ENCODE measurements at regions of chr7 and their contacts with region 1.

Region 1: DNA sequence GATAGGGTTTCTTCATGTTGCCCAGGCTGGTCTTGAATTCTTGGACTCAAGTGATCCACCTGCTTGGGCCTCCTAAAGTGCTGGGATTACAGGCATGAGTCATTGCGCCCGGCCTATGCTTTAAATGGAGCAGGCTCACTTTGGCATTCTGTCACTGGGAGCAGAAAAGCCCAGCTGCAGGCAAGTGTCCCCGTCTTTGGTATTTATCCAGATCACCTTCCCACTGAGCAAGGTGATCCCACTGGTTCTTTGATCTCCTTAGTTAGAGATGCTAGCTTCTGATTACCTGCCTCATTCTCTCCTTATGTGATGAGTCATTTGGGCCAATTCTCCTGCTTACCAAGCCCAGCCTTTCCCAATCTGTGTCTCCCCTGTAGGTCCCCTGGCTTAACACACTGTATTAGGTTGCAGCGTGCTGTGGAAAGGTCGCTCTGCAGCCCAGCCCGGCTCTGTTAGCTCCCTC is 39.3 kb downstream of the SPDYE5 start:
- DNase-seq: no peak
- ATAC-seq: no peak
- H3K4me3 Mint-ChIP-seq: no peak overlapping the region
- H3K27ac Mint-ChIP-seq: no peak overlapping the region
- H3K4me1 Mint-ChIP-seq: peaks cover 24% of the 10 kb centered on the region
- H3K27me3 Mint-ChIP-seq: no peaks in the 10 kb centered on the region
- CTCF ChIP-seq: no peak

Region 2: DNA sequence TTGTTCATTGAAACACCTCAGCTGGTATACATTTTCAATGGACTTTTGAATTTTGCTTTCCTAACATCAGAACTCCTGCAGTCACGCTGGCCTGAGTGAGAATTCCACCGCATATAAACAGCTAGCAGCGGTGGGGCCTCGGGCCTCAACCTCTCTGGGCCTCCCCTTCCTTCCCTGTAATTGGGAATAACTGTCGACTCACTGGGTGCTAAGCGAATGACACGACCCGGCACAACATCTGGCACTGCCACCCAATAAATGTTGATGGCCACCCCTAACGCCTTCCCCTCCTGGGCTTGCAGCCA is 458.5 kb before region 1 on chr7:
- CTCF ChIA-PET with region 1: no interaction called
- POLR2A ChIA-PET with region 1: no interaction called
- intact Hi-C with region 1: loop called (anchors 5 kb)
- DNase-seq: no peak
- ATAC-seq: no peak
- H3K4me3 Mint-ChIP-seq: peak overlapping the region; percentile 96
- H3K27ac Mint-ChIP-seq: peak overlapping the region; percentile 96
- H3K4me1 Mint-ChIP-seq: peaks cover 13% of the 10 kb centered on the region
- H3K27me3 Mint-ChIP-seq: no peaks in the 10 kb centered on the region
- CTCF ChIP-seq: no peak

Region 3: GRCh38 chr7:75617634-75618234 is 86.3 kb after region 1 on chr7:
- CTCF ChIA-PET with region 1: no interaction called
- POLR2A ChIA-PET with region 1: interaction called, 5 read pairs
- intact Hi-C with region 1: loop called (anchors 5 kb)
- DNase-seq: peak; percentile 50
- ATAC-seq: peak; percentile 83
- H3K4me3 Mint-ChIP-seq: peak overlapping the region; percentile 83
- H3K27ac Mint-ChIP-seq: peak overlapping the region; percentile 92
- H3K4me1 Mint-ChIP-seq: peaks cover 64% of the 10 kb centered on the region
- H3K27me3 Mint-ChIP-seq: no peaks in the 10 kb centered on the region
- CTCF ChIP-seq: no peak

Region 4: DNA sequence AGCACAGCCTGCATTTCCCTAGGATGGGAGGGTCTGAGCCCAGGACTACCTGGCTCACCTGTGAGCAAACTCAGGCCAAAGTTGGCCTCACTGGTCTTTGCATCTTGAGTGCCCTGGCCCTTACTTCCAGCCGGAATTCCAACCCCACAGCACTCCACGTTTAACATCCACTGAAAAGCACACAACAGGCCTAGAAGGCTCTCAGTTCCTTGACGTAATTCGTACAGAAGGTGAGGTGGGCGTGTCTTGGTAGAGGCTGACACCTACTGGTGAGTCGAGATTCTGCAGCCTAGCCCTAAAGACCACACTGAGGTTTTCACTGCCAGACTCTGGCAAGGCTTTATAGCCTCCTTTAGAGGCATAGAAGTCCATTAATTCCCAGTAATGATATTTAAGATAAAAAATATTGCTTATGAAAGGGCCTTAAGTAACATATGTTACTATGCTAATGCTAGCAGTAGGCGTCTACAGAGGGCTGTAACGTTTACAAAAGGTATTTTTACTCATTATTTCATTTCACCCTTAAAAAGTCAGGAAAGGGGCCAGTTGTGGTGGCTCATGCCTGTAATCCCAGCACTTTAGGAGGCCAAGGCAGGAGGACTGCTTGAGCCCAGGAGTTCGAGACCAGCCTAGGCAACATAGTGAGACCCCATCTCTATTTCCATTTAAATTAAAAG is 111.6 kb after region 1 on chr7:
- CTCF ChIA-PET with region 1: no interaction called
- POLR2A ChIA-PET with region 1: no interaction called
- intact Hi-C with region 1: loop called (anchors 1 kb)
- DNase-seq: peak; percentile 39
- ATAC-seq: peak; percentile 90
- H3K4me3 Mint-ChIP-seq: no peak overlapping the region
- H3K27ac Mint-ChIP-seq: no peak overlapping the region
- H3K4me1 Mint-ChIP-seq: peaks cover 17% of the 10 kb centered on the region
- H3K27me3 Mint-ChIP-seq: no peaks in the 10 kb centered on the region
- CTCF ChIP-seq: peak; percentile 41

Region 5: GRCh38 chr7:75662579-75663301 is 131.3 kb after region 1 on chr7:
- CTCF ChIA-PET with region 1: no interaction called
- POLR2A ChIA-PET with region 1: no interaction called
- intact Hi-C with region 1: loop called (anchors 1 kb)
- DNase-seq: peak; percentile 44
- ATAC-seq: peak; percentile 88
- H3K4me3 Mint-ChIP-seq: peak overlapping the region; percentile 55
- H3K27ac Mint-ChIP-seq: peak overlapping the region; percentile 84
- H3K4me1 Mint-ChIP-seq: peaks cover 29% of the 10 kb centered on the region
- H3K27me3 Mint-ChIP-seq: no peaks in the 10 kb centered on the region
- CTCF ChIP-seq: no peak

Region 6: GRCh38 chr7:75738987-75739795 is 207.8 kb after region 1 on chr7:
- CTCF ChIA-PET with region 1: no interaction called
- POLR2A ChIA-PET with region 1: no interaction called
- intact Hi-C with region 1: loop called (anchors 1 kb)
- DNase-seq: peak; percentile 97
- ATAC-seq: peak; percentile 91
- H3K4me3 Mint-ChIP-seq: peak overlapping the region; percentile 96
- H3K27ac Mint-ChIP-seq: peak overlapping the region; percentile 97
- H3K4me1 Mint-ChIP-seq: peaks cover 38% of the 10 kb centered on the region
- H3K27me3 Mint-ChIP-seq: no peaks in the 10 kb centered on the region
- CTCF ChIP-seq: no peak

Region 7: DNA sequence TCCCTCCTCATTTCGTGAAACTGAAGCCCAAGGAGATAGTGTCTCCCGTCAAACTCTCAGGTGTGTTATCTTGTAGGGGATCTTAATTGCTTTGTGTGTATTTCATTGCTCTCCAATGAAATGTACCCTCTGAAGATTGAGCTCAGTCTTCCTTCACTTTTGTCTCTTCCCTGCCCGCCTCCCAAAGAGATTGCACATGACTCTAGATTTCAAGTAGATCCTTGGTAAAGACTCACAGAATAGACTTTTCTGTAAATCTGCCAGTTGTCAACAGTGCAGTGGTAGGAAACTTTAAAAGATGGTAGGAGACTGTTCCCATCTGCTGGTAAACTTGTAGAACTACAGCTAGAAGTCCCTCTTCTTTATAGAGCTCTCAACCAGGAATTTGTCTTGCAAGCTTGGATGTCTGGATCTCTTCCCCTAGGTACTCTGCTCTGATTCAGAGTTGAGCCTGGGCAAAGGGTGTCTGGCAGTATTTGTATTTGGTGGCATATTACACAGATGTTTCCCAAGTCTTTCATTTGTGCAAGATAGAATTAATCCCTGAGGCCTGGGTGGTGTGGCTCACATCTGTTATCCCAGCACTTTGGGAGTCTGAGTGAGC is 231.0 kb after region 1 on chr7:
- CTCF ChIA-PET with region 1: interaction called, 5 read pairs
- POLR2A ChIA-PET with region 1: no interaction called
- intact Hi-C with region 1: loop called (anchors 2 kb)
- DNase-seq: no peak
- ATAC-seq: peak; percentile 90
- H3K4me3 Mint-ChIP-seq: no peak overlapping the region
- H3K27ac Mint-ChIP-seq: no peak overlapping the region
- H3K4me1 Mint-ChIP-seq: peaks cover 5% of the 10 kb centered on the region
- H3K27me3 Mint-ChIP-seq: no peaks in the 10 kb centered on the region
- CTCF ChIP-seq: no peak

Region 8: DNA sequence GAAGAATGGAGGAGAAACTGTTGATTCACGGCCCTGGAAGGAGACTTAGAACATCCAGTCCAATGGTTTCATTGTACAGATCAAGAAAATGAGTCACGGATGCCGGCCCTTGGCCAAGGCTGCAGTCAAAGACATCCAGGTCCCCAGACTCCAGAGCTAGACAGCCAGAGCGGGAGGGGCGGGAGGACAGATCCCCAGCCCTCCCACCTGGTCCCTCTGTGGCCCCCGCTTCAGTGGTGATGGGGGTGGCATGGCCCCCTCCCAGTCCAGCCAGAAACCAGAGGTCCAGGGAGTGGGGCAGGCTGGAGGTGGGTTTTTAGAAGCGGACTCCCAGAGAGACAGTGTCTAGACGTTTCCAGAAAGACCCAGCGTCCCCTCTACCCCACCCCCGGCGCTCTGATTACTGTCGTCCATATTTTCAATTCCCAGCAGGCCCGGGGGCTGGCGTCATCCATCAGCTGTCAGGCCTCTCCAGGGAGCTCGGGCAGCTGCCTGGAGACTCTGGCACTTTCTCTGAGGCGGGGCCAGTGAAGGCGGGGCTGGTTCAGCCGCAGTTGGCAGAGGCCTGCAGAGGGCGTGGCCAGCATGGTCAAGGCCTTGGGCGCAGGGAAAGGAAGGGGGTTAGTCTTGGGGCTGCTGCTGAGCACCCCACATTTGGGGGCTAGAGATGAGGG is 763.1 kb after region 1 on chr7:
- CTCF ChIA-PET with region 1: no interaction called
- POLR2A ChIA-PET with region 1: no interaction called
- intact Hi-C with region 1: no loop called
- DNase-seq: peak; percentile 44
- ATAC-seq: peak; percentile 76
- H3K4me3 Mint-ChIP-seq: no peak overlapping the region
- H3K27ac Mint-ChIP-seq: no peak overlapping the region
- H3K4me1 Mint-ChIP-seq: peaks cover 7% of the 10 kb centered on the region
- H3K27me3 Mint-ChIP-seq: peaks cover 9% of the 10 kb centered on the region
- CTCF ChIP-seq: no peak